CD8-positive, alpha-beta T cell (primary cell): ENCODE measurements at regions of chr7 and their contacts with region 1.

Region 1: GRCh38 chr7:121547544-121548092 is 151.5 kb upstream of the FAM3C start:
- DNase-seq: peak in 2 of 9 experiments; percentile 67 to 75
- ATAC-seq: peak; percentile 85
- H3K4me3 ChIP-seq: no peak overlapping the region
- H3K4me3 Mint-ChIP-seq: no peak overlapping the region
- H3K27ac ChIP-seq: no peak overlapping the region
- H3K27ac Mint-ChIP-seq: no peak overlapping the region
- H3K4me1 ChIP-seq: no peaks in the 10 kb centered on the region
- H3K4me1 Mint-ChIP-seq: peaks cover 7% of the 10 kb centered on the region
- H3K27me3 ChIP-seq: no peaks in the 10 kb centered on the region
- H3K27me3 Mint-ChIP-seq: no peaks in the 10 kb centered on the region
- CTCF ChIP-seq: peak; percentile 85

Region 2: DNA sequence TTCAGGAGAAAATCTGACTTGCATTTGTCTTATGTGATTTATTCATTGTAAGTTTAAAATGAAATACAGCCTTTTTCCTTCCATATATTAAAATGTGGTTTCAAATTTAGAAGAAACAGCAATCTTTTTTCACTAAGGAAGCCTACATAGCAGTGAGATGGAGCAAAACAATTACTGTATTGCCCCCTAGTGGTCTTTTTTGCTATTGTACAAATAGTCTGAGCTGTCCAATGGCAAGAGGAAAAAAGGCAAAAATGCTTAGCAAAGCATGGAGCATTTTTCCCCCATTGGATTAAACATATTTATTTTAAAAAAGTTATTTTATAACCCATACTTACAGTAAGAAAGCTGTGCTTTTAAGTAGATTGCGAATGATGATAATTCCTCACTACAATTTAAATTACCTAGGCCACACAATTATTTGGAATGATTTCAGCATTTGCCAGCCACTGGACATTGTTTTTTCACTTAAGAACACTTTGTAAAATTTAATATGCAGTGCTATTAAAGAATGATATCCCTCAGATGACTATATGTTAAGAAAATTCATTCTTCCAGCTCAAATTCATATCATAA is 439.6 kb before region 1 on chr7:
- CTCF ChIA-PET with region 1: no interaction called
- POLR2A ChIA-PET with region 1: no interaction called
- intact Hi-C with region 1: loop called in 1 of 2 experiments (anchors 1 kb)
- DNase-seq: peak in 2 of 9 experiments; percentile 55 to 64
- ATAC-seq: peak; percentile 79
- H3K4me3 ChIP-seq: no peak overlapping the region
- H3K4me3 Mint-ChIP-seq: no peak overlapping the region
- H3K27ac ChIP-seq: no peak overlapping the region
- H3K27ac Mint-ChIP-seq: no peak overlapping the region
- H3K4me1 ChIP-seq: no peaks in the 10 kb centered on the region
- H3K4me1 Mint-ChIP-seq: no peaks in the 10 kb centered on the region
- H3K27me3 ChIP-seq: no peaks in the 10 kb centered on the region
- H3K27me3 Mint-ChIP-seq: peaks cover 9% of the 10 kb centered on the region
- CTCF ChIP-seq: peak; percentile 87

Region 3: GRCh38 chr7:121126801-121127534 is 420.6 kb before region 1 on chr7:
- CTCF ChIA-PET with region 1: no interaction called
- POLR2A ChIA-PET with region 1: no interaction called
- intact Hi-C with region 1: loop called (anchors 5 to 10 kb)
- DNase-seq: peak in 1 of 9 experiments; percentile 4
- ATAC-seq: no peak
- H3K4me3 ChIP-seq: no peak overlapping the region
- H3K4me3 Mint-ChIP-seq: no peak overlapping the region
- H3K27ac ChIP-seq: no peak overlapping the region
- H3K27ac Mint-ChIP-seq: no peak overlapping the region
- H3K4me1 ChIP-seq: no peaks in the 10 kb centered on the region
- H3K4me1 Mint-ChIP-seq: no peaks in the 10 kb centered on the region
- H3K27me3 ChIP-seq: no peaks in the 10 kb centered on the region
- H3K27me3 Mint-ChIP-seq: peaks cover 10% of the 10 kb centered on the region
- CTCF ChIP-seq: no peak

Region 4: GRCh38 chr7:121442845-121443244 is 104.8 kb before region 1 on chr7:
- CTCF ChIA-PET with region 1: interaction called, 5 read pairs
- POLR2A ChIA-PET with region 1: interaction called, 9 read pairs
- intact Hi-C with region 1: loop called in 1 of 2 experiments (anchors 1 kb)
- DNase-seq: peak in 4 of 9 experiments; percentile 14 to 76 (median 54)
- ATAC-seq: peak; percentile 74
- H3K4me3 ChIP-seq: no peak overlapping the region
- H3K4me3 Mint-ChIP-seq: no peak overlapping the region
- H3K27ac ChIP-seq: peak overlapping the region in 1 of 2 experiments; percentile 83
- H3K27ac Mint-ChIP-seq: peak overlapping the region; percentile 52
- H3K4me1 ChIP-seq: peaks cover 12% of the 10 kb centered on the region
- H3K4me1 Mint-ChIP-seq: peaks cover 33% of the 10 kb centered on the region
- H3K27me3 ChIP-seq: no peaks in the 10 kb centered on the region
- H3K27me3 Mint-ChIP-seq: no peaks in the 10 kb centered on the region
- CTCF ChIP-seq: no peak

Region 5: GRCh38 chr7:121530227-121531174 is 17.1 kb before region 1 on chr7:
- CTCF ChIA-PET with region 1: interaction called, 3 read pairs
- POLR2A ChIA-PET with region 1: no interaction called
- intact Hi-C with region 1: loop called in 1 of 2 experiments (anchors 2 kb)
- DNase-seq: peak; percentile 13 to 84 (median 53)
- ATAC-seq: peak; percentile 97
- H3K4me3 ChIP-seq: no peak overlapping the region
- H3K4me3 Mint-ChIP-seq: no peak overlapping the region
- H3K27ac ChIP-seq: peak overlapping the region in 1 of 2 experiments; percentile 53
- H3K27ac Mint-ChIP-seq: peak overlapping the region; percentile 50
- H3K4me1 ChIP-seq: peaks cover 4% of the 10 kb centered on the region
- H3K4me1 Mint-ChIP-seq: peaks cover 10% of the 10 kb centered on the region
- H3K27me3 ChIP-seq: no peaks in the 10 kb centered on the region
- H3K27me3 Mint-ChIP-seq: peaks cover 2% of the 10 kb centered on the region
- CTCF ChIP-seq: no peak

Region 6: GRCh38 chr7:121604627-121605316 is 57.2 kb after region 1 on chr7:
- CTCF ChIA-PET with region 1: no interaction called
- POLR2A ChIA-PET with region 1: no interaction called
- intact Hi-C with region 1: no loop called
- DNase-seq: no peak
- ATAC-seq: no peak
- H3K4me3 ChIP-seq: no peak overlapping the region
- H3K4me3 Mint-ChIP-seq: no peak overlapping the region
- H3K27ac ChIP-seq: no peak overlapping the region
- H3K27ac Mint-ChIP-seq: no peak overlapping the region
- H3K4me1 ChIP-seq: no peaks in the 10 kb centered on the region
- H3K4me1 Mint-ChIP-seq: no peaks in the 10 kb centered on the region
- H3K27me3 ChIP-seq: no peaks in the 10 kb centered on the region
- H3K27me3 Mint-ChIP-seq: peaks cover 2% of the 10 kb centered on the region
- CTCF ChIP-seq: no peak